PC-3 (cell line): ENCODE measurements at regions of chr6 and their contacts with region 1.

Region 1: DNA sequence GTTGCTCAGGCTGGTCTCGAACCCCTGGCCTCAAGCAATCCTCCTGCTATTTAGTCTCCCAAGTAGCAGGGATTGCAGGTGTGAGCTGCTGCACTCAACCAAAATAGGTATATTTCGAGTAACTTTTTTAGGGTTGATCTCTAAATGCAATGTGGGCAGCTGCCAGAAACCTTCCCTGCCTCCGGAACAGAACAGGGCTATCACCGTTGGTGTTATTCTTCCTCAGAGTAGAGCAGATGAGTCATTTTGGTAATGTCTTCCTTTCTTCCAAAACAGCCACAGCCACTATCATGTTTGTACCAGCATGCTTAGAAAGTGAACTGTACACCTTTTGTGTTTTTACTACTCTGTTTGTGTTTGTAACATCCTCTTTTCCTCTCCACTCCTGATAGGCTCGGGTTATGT is 44.1 kb downstream of the SNX9 start:
- DNase-seq: peak; percentile 48
- ATAC-seq: peak; percentile 63
- H3K4me3 ChIP-seq: no peak overlapping the region
- H3K27ac ChIP-seq: no peak overlapping the region
- H3K4me1 ChIP-seq: peaks cover 8% of the 10 kb centered on the region
- H3K27me3 ChIP-seq: no peaks in the 10 kb centered on the region
- CTCF ChIP-seq: no peak

Region 2: DNA sequence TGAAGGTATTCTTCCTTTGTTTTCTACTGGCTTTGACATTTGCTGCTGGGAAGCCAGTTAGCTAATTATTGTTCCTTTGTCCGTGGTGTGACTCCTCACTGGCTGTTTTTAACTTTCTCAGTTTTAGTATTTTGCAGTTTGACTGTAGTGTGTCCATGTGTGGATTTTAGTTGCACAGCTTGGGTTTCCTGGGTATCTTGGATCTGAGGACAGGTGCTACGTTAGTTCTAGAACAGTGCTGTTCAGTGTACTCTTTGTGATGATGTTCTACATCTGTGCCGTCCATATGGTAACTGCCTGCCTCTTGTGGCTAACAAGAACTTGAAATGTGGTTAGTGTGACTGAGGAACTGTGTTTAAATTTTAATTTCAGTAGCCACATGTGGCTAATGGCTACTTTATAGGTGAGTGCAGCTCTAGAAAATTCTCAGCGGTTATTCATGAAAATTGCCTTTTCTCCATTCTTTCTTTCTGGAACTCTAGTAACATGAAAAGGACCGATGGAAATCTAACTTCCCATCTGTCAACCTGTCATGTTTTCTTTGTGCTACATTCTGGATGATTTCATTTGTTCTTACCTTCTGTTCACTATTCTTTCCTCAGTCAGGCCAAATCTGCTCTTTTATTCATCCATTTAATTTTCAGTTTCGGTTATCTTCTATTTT is 36.7 kb before region 1 on chr6:
- CTCF ChIA-PET with region 1: no interaction called
- POLR2A ChIA-PET with region 1: no interaction called
- intact Hi-C with region 1: loop called (anchors 5 kb)
- DNase-seq: no peak
- ATAC-seq: no peak
- H3K4me3 ChIP-seq: no peak overlapping the region
- H3K27ac ChIP-seq: no peak overlapping the region
- H3K4me1 ChIP-seq: peaks cover 29% of the 10 kb centered on the region
- H3K27me3 ChIP-seq: no peaks in the 10 kb centered on the region
- CTCF ChIP-seq: no peak